H1 (cell line): ENCODE measurements at regions of chr5 and their contacts with region 1.

Region 1: GRCh38 chr5:69024241-69024651 is 69.6 kb upstream of the SLC30A5 start:
- DNase-seq: peak in 1 of 2 experiments; percentile 51
- H3K4me3 ChIP-seq: no peak overlapping the region
- H3K27ac ChIP-seq: no peak overlapping the region
- H3K4me1 ChIP-seq: no peaks in the 10 kb centered on the region
- H3K27me3 ChIP-seq: no peaks in the 10 kb centered on the region
- CTCF ChIP-seq: peak; percentile 34 to 86 (median 59)
- EP300 ChIP-seq: no peak
- POLR2A ChIP-seq: no peak
- RAD21 ChIP-seq: peak; percentile 86

Region 2: DNA sequence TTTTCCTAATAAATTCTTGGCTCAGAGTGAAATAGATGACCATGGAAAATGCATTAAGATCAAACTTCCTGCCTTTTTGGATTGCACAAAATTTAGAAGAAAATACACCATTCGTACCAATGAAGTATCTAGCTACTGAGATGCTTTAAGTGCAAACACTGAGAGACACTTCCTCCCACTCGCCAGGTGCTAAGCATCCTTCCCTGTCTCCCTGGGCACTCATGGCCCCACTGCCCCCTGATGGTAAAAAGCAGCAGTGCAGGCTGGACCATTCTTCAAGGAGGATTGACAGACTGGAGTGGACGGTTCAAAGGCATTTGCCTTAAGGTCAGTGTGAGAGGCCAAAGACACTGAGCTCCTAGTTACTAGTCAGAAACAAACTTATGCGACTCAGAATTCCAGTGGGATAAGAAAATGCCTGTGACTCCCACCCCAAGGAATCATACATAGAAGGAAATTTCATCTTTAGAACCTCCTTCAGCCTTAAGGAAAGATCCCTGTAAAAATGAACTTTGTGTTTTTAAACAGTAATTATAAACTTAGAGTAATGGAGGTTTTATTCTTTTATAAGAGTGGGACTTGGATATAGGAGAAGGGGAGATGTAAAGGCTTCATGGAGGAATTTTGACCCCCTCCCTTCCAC is 16.4 kb before region 1 on chr5:
- CTCF ChIA-PET with region 1: interaction called, 18 read pairs
- POLR2A ChIA-PET with region 1: no interaction called
- DNase-seq: peak; percentile 56 to 95
- H3K4me3 ChIP-seq: no peak overlapping the region
- H3K27ac ChIP-seq: no peak overlapping the region
- H3K4me1 ChIP-seq: no peaks in the 10 kb centered on the region
- H3K27me3 ChIP-seq: no peaks in the 10 kb centered on the region
- CTCF ChIP-seq: peak; percentile 83 to 99 (median 99)
- EP300 ChIP-seq: no peak
- POLR2A ChIP-seq: no peak
- RAD21 ChIP-seq: peak; percentile 95 to 98

Region 3: GRCh38 chr5:69042915-69043658 is 18.8 kb after region 1 on chr5:
- CTCF ChIA-PET with region 1: interaction called, 23 read pairs
- POLR2A ChIA-PET with region 1: interaction called, 4 read pairs
- DNase-seq: peak; percentile 31 to 76
- H3K4me3 ChIP-seq: peak overlapping the region; percentile 7 to 57 (median 40); a peak in 6 of 8 replicates
- H3K27ac ChIP-seq: no peak overlapping the region
- H3K4me1 ChIP-seq: no peaks in the 10 kb centered on the region; a peak in 1 of 7 replicates
- H3K27me3 ChIP-seq: no peaks in the 10 kb centered on the region
- CTCF ChIP-seq: peak in 2 of 3 experiments; percentile 73 to 74; a peak in 3 of 4 replicates
- EP300 ChIP-seq: no peak
- POLR2A ChIP-seq: no peak
- RAD21 ChIP-seq: peak; percentile 88 to 89

Region 4: GRCh38 chr5:69048230-69048629 is 24.0 kb after region 1 on chr5:
- CTCF ChIA-PET with region 1: interaction called, 23 read pairs
- POLR2A ChIA-PET with region 1: interaction called, 3 read pairs
- DNase-seq: no peak
- H3K4me3 ChIP-seq: no peak overlapping the region
- H3K27ac ChIP-seq: no peak overlapping the region
- H3K4me1 ChIP-seq: no peaks in the 10 kb centered on the region; a peak in 1 of 7 replicates
- H3K27me3 ChIP-seq: no peaks in the 10 kb centered on the region
- CTCF ChIP-seq: peak in 2 of 3 experiments; percentile 48 to 67; a peak in 3 of 4 replicates
- EP300 ChIP-seq: no peak
- POLR2A ChIP-seq: no peak
- RAD21 ChIP-seq: peak; percentile 77 to 81